Activated naive CD8-positive, alpha-beta T cell treated with anti-CD3 and anti-CD28 coated beads, Interleukin-2, amount 10 ng/mL, durations not matched to agents 7 days and 5 days (primary cell): ENCODE measurements at regions of chr6 and their contacts with region 1.

Region 1: DNA sequence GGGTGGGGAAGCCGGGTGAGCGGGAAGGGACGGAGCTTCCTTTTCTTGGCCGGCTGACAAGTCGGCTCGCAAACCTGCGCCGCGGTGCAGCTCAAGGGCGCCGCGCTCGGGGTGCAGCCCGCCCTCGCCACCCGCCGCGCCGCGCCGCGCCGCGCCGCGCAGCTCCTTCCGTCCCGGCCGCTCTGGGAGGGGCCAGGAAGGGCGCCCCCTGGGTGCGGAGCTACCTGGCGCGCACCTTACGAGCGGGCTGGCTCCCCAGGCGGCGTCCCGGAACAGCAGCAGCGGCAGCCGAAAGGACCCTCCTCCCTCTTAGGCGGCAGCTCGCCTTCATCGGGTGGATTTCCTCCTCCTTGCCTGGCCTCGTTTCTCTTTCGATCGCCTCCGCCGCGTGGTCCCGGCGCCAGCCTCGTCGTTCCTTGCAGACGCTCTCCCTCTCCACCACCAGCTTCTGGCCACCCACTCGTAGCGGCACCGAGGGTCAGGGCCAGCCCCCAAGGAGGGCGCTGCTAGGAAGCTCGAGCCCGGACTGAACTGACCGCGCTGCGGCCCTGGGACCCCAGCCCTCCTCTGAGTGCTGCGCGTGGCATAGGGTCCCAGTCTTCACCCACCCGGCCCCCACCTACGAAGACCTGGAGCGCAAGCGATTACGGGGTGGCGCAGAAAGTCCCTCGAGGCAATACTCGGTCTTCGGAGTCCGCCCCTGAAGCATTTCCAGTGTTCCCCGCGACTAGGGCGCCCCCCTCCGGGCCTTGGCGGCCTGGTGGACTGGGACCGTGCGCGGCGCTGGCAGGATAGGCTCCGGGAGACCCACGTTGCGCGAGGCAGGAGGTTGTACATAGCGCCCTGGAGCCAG is at the start of gene MAP3K5:
- DNase-seq: peak; percentile 97
- ATAC-seq: peak; percentile 84
- H3K4me3 Mint-ChIP-seq: peak within 1 kb of the TSS; percentile 96
- H3K27ac Mint-ChIP-seq: peak within 1 kb of the TSS; percentile 97
- H3K4me1 Mint-ChIP-seq: peaks cover 33% of the 10 kb centered on the region
- H3K27me3 Mint-ChIP-seq: peaks cover 2% of the 10 kb centered on the region
- total RNA-seq, gene MAP3K5: 18.3 to 19.8 TPM

Region 2: GRCh38 chr6:136643850-136644596 is 148.6 kb before region 1 on chr6:
- POLR2A ChIA-PET with region 1: interaction called, 93 read pairs
- DNase-seq: peak; percentile 73
- ATAC-seq: peak; percentile 62
- H3K4me3 Mint-ChIP-seq: no peak overlapping the region
- H3K27ac Mint-ChIP-seq: no peak overlapping the region
- H3K4me1 Mint-ChIP-seq: no peaks in the 10 kb centered on the region
- H3K27me3 Mint-ChIP-seq: no peaks in the 10 kb centered on the region

Region 3: DNA sequence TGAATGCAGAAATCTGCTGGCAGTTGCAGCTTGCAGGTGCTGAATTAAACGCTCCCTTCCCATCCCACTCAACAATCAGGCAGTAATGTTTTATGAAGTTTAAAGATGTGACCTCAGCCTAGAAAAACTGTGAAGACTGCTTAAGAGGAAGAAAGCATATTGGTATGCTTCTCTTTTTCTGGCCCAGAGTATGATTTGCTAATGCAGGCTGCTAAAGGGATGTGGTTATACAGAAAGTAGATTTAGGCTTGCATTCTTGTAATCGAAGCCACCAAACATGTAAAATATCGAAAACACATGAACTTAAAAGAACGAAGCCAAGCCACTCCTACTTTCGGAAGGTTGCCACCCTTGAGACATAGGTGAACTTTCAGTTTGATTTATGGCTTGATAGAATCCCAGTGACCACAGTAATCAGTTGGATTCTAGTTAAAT is 41.1 kb before region 1 on chr6:
- POLR2A ChIA-PET with region 1: interaction called, 41 read pairs
- DNase-seq: no peak
- ATAC-seq: peak; percentile 78
- H3K4me3 Mint-ChIP-seq: peak overlapping the region; percentile 91
- H3K27ac Mint-ChIP-seq: peak overlapping the region; percentile 95
- H3K4me1 Mint-ChIP-seq: peaks cover 64% of the 10 kb centered on the region
- H3K27me3 Mint-ChIP-seq: no peaks in the 10 kb centered on the region

Region 4: DNA sequence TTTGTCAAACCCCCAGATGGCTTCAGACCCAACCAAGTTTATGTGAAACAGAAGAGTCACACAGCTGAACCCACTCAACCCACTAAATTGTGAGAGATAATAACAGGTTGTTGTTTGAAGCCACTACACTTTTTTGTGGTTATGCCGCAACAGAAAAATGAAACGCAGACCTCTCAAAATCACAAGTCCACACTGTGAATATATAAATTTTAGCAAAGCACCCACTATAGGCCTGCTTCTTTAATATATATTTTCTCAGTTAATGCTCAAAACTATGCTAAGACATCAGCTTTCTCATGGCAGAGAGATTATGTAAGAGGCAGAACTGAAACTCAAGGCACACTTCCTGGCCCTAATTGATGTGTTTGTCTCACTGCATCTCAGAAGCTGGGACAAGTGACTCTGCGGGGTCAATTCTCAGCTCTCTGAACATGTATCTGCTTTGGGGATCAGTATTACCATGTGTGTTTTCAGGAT is 28.1 kb before region 1 on chr6:
- POLR2A ChIA-PET with region 1: interaction called, 32 read pairs
- DNase-seq: no peak
- ATAC-seq: peak; percentile 70
- H3K4me3 Mint-ChIP-seq: peak overlapping the region; percentile 46
- H3K27ac Mint-ChIP-seq: peak overlapping the region; percentile 85
- H3K4me1 Mint-ChIP-seq: peaks cover 64% of the 10 kb centered on the region
- H3K27me3 Mint-ChIP-seq: no peaks in the 10 kb centered on the region

Region 5: GRCh38 chr6:136822376-136823127 is 29.9 kb after region 1 on chr6 and contains the start of gene PEX7:
- POLR2A ChIA-PET with region 1: interaction called, 12 read pairs
- DNase-seq: peak; percentile 90
- ATAC-seq: peak; percentile 96
- H3K4me3 Mint-ChIP-seq: peak within 1 kb of the TSS; percentile 89
- H3K27ac Mint-ChIP-seq: peak within 1 kb of the TSS; percentile 92
- H3K4me1 Mint-ChIP-seq: peaks cover 9% of the 10 kb centered on the region
- H3K27me3 Mint-ChIP-seq: peaks cover 2% of the 10 kb centered on the region
- total RNA-seq, gene PEX7: 3.0 to 3.7 TPM